ENCODE measurements at regions of chr1 and their contacts with region 1.

Region 1: GRCh38 chr1:180631766-180632325 is at the start of gene XPR1:
- DNase-seq: peak; percentile 95
- H3K4me3 ChIP-seq: peak within 1 kb of the TSS; percentile 72 to 99
- H3K27ac ChIP-seq: peak within 1 kb of the TSS; percentile 85 to 95
- H3K4me1 ChIP-seq: peaks cover 20 to 22% of the 10 kb centered on the region in 2 experiments; a peak in 3 of 4 replicates
- H3K27me3 ChIP-seq: no peaks in the 10 kb centered on the region
- CTCF ChIP-seq: no peak
- EP300 ChIP-seq: no peak
- RAD21 ChIP-seq: peak; percentile 44; the same call in 1 of the 2 replicates
- polyA plus RNA-seq, gene XPR1: 7.9 and 11.5 TPM in 2 replicates

Region 2: GRCh38 chr1:180365039-180365438 is 266.8 kb before region 1 on chr1:
- CTCF ChIA-PET with region 1: no interaction called
- POLR2A ChIA-PET with region 1: no interaction called
- DNase-seq: no peak
- H3K4me3 ChIP-seq: no peak overlapping the region
- H3K27ac ChIP-seq: no peak overlapping the region
- H3K4me1 ChIP-seq: peaks cover 5 to 7% of the 10 kb centered on the region in 2 experiments; a peak in 3 of 4 replicates
- H3K27me3 ChIP-seq: no peaks in the 10 kb centered on the region
- CTCF ChIP-seq: peak; percentile 39
- EP300 ChIP-seq: no peak
- RAD21 ChIP-seq: peak; percentile 43

Region 3: DNA sequence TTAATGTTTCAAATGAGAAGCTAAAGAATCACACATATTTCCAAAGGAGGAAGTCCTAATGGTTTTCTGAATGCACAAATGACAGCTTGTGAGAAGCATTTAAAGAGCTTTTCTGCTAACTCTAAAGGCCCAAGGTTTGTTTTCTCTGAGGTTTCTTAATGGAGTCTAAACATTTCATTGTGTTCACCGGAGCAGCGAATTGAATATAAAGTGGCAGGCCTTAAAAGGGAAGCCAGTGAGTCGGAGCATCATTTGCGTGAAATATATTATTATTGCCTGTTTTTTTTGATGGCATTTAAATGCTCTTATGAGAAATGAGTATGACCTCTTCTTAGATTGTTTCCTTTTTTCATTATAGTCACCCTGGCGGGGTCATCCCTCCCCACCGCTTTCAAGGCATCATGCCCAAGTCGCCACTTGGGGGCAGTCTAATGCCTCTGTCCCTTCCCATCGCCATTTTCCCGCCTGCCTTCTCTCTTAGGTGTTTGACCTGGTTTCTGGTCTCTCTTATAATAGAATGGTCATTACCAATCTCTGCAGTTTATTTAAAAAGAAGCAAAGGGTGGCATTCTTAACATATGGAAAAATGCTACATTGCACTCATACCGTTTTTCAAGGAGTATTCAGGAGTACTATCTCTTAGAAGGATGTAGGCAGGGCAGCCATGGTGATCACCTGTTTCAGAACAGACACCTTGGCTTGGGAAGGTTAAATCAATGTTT is 98.4 kb before region 1 on chr1:
- CTCF ChIA-PET with region 1: interaction called, 10 read pairs
- POLR2A ChIA-PET with region 1: interaction called, 3 read pairs
- DNase-seq: peak; percentile 72
- H3K4me3 ChIP-seq: no peak overlapping the region; a peak in 1 of 4 replicates
- H3K27ac ChIP-seq: peak overlapping the region in 1 of 2 experiments; percentile 0; a peak in 1 of 4 replicates
- H3K4me1 ChIP-seq: peaks cover 0 to 11% of the 10 kb centered on the region in 2 experiments; a peak in 2 of 4 replicates
- H3K27me3 ChIP-seq: no peaks in the 10 kb centered on the region
- CTCF ChIP-seq: peak; percentile 95
- EP300 ChIP-seq: no peak
- RAD21 ChIP-seq: peak; percentile 97

Region 4: GRCh38 chr1:180560868-180561600 is 70.8 kb before region 1 on chr1:
- CTCF ChIA-PET with region 1: no interaction called
- POLR2A ChIA-PET with region 1: no interaction called
- DNase-seq: no peak
- H3K4me3 ChIP-seq: no peak overlapping the region
- H3K27ac ChIP-seq: peak overlapping the region; percentile 39 to 40; a peak in 3 of 4 replicates
- H3K4me1 ChIP-seq: peaks cover 16 to 18% of the 10 kb centered on the region in 2 experiments
- H3K27me3 ChIP-seq: no peaks in the 10 kb centered on the region
- CTCF ChIP-seq: no peak
- EP300 ChIP-seq: no peak
- RAD21 ChIP-seq: no peak

Region 5: GRCh38 chr1:180620581-180620980 is 11.3 kb before region 1 on chr1:
- CTCF ChIA-PET with region 1: interaction called, 10 read pairs
- POLR2A ChIA-PET with region 1: interaction called, 4 read pairs
- DNase-seq: no peak
- H3K4me3 ChIP-seq: no peak overlapping the region
- H3K27ac ChIP-seq: no peak overlapping the region
- H3K4me1 ChIP-seq: no peaks in the 10 kb centered on the region
- H3K27me3 ChIP-seq: no peaks in the 10 kb centered on the region
- CTCF ChIP-seq: no peak
- EP300 ChIP-seq: no peak
- RAD21 ChIP-seq: no peak

Region 6: DNA sequence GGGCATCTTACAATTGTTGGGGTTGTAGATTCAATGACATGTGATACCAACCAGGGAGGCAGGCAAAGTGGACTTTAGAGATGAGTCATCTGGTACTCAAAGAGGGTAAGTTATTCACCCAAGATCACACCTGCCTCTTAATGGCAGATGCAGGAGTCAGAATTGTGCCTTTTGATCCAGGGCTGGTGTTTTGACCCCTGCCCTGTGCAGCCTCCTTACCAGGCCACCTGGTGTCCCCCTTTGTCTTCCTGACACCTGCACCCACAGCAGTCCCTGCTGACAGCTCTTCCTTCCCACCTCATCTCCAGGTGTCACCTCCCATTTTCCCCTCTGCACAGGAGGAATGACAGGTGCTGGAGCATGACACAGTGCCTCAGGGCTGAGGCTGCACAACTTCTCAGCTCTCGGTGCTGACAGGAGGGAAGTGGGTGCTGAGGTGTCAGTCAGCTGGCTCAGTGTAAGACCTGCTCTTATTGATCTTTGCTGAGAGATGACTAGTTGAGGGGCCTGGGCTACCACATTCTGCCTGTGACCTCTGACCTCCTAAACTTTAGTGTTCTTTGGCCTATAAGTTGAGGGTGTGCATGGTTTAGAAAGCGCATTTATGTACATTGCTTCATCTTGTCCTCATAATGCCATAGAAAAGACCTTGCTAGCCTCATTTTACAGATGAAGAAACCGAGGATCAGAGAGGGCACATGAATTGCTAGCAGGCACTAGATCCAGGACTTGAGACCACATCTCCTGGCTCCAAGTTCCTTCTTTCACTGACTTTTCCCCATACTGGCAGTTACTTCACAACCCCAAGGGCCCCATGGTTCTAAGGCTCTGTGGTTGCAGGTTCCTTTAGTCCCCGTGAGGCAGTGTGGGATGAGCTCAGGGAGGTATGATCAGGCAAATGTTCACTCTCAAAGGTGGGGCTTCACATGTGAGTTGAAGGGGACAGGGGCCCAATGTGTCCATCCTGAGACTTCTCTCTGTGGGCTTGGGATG is 882.7 kb after region 1 on chr1:
- CTCF ChIA-PET with region 1: no interaction called
- POLR2A ChIA-PET with region 1: no interaction called
- DNase-seq: no peak
- H3K4me3 ChIP-seq: no peak overlapping the region
- H3K27ac ChIP-seq: no peak overlapping the region
- H3K4me1 ChIP-seq: no peaks in the 10 kb centered on the region
- H3K27me3 ChIP-seq: no peaks in the 10 kb centered on the region
- CTCF ChIP-seq: no peak
- EP300 ChIP-seq: no peak
- RAD21 ChIP-seq: no peak